ENCODE measurements at regions of chr3 and their contacts with region 1.

Region 1: DNA sequence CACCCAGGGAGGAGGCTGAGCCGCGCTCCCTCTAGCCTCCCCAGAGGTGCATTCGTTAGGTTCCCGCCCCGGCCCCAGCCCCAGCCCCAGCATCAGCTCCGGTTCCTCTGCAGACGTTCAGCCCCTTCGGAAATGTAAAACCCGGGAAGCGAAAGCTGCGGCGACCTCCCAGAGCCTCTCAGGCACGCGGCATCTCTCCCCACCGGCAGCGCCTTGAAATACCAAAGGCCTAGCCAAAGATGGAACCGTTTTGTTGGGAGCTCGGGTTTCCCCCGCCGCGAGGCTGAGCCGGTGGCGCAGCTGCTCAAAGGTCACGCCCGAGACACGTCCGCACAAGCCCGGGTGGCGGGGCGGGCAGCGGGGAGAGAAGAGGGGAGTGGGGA is 77.8 kb upstream of the HES1 start:
- DNase-seq: peak in 2 of 3 donors; percentile 24 to 50
- H3K4me3 ChIP-seq: peak overlapping the region in 2 of 3 experiments; percentile 8 to 54
- H3K4me3 Mint-ChIP-seq: peak overlapping the region; percentile 71 to 86
- H3K27ac ChIP-seq: no peak overlapping the region
- H3K27ac Mint-ChIP-seq: peak overlapping the region in 1 of 7 donors; percentile 37
- H3K4me1 ChIP-seq: peaks cover 5 to 9% of the 10 kb centered on the region in 2 donors
- H3K4me1 Mint-ChIP-seq: peaks cover 20% of the 10 kb centered on the region
- H3K27me3 ChIP-seq: peaks cover 11 to 34% of the 10 kb centered on the region in 2 donors
- H3K27me3 Mint-ChIP-seq: peaks cover 23 to 54% (median 43%) of the 10 kb centered on the region in 3 donors
- CTCF ChIP-seq: no peak

Region 2: DNA sequence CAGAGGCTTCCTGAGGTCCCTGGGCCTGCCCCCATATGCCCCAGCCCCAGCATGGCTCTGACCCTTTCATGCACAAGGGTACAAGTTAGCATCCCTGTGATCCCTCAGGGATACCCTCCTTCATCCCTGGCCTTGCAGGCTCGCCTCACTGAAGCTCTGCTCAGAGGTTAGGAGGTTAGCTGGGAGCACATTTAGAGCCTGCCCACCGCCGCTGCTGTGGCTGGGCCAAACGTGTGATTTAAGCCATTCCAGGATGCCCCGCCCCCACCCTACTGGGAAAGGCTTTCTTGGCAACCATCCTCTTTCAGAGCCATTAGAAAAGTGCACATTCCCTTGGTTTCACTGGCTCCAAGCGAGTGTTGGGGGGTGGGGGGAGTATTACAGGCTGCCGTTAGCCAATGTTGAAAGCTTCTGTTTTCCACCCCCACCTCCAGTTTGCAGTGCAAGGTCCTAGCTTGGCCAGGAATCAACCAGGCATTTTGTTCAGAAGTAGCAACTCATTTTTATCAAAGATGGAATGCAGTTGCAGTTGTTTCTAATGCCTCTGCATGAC is 71.5 kb after region 1 on chr3:
- intact Hi-C with region 1: loop called in 1 of 2 experiments (anchors 10 kb)
- DNase-seq: no peak
- H3K4me3 ChIP-seq: no peak overlapping the region
- H3K4me3 Mint-ChIP-seq: no peak overlapping the region
- H3K27ac ChIP-seq: no peak overlapping the region
- H3K27ac Mint-ChIP-seq: no peak overlapping the region
- H3K4me1 ChIP-seq: peaks cover 7 to 12% of the 10 kb centered on the region in 2 donors
- H3K4me1 Mint-ChIP-seq: peaks cover 5% of the 10 kb centered on the region
- H3K27me3 ChIP-seq: peaks cover 37 to 52% of the 10 kb centered on the region in 2 donors
- H3K27me3 Mint-ChIP-seq: peaks cover 54 to 76% (median 54%) of the 10 kb centered on the region in 3 donors
- CTCF ChIP-seq: no peak

Measured in CD14-positive monocyte (primary cell).